ENCODE measurements at regions of chr13 and their contacts with region 1.

Region 1: DNA sequence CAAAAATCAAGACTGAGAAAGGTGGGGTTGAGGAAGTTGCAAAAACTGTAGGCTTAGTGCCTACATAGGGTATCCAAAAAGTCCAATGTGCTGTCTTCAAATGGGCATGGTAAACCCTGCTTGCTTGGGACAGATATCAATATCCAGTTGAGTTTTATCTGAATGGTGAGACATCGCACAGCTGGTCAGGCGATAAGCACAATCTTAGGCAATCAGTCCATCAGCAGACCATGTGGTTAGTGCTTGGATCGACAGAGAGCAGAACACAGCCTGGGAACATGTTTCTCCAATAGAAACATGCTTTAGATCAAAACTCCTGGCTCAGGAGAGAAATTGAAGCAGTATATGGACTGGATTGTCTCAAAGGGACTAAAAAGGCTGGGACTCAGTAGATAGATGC is 151.3 kb upstream of the IPO5 start:
- DNase-seq: no peak
- H3K4me3 ChIP-seq: no peak overlapping the region
- H3K27ac ChIP-seq: no peak overlapping the region
- H3K4me1 ChIP-seq: no peaks in the 10 kb centered on the region
- H3K27me3 ChIP-seq: peaks cover 10% of the 10 kb centered on the region
- CTCF ChIP-seq: no peak

Region 2: DNA sequence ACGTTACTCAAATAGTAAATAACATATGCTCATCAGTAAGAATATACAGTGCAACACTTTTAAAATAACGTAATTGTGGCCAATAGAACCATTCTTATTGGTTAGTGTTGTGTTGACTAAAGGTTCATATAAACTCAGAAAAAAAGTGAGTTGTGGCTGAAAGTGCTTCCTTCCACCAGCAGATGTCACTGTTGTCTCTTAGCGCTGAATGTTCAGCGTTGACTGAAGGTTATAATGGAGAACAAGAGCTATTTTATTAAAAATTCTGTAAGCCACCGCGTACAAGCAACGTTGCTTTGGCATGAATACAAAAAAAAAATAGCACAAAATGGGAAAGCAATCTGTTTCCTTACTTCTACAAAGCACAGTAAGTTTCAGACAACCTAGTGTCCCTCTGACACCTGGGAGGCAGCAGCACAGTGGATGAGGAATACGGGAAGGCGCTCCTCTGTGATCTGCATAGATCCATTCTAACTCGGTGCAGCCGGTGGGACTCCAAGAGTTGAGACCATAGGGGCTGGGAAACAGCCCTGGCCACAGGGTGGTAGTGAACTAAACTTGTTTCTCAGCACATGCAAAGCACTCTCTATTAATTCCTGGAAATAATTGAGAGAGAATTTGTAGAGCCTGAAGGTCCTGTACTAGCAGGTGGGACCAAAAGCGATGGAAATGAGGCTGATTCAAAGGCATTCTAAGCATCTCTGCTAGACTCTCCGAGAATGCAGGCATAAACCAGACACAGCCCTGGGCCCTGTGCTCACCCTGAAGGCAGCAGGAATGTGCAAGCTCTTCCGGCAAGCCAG is 784.0 kb before region 1 on chr13:
- intact Hi-C with region 1: loop called (anchors 5 kb)
- DNase-seq: no peak
- H3K4me3 ChIP-seq: peak overlapping the region; percentile 15
- H3K27ac ChIP-seq: no peak overlapping the region
- H3K4me1 ChIP-seq: peaks cover 5% of the 10 kb centered on the region
- H3K27me3 ChIP-seq: peaks cover 24% of the 10 kb centered on the region
- CTCF ChIP-seq: peak; percentile 95

Region 3: DNA sequence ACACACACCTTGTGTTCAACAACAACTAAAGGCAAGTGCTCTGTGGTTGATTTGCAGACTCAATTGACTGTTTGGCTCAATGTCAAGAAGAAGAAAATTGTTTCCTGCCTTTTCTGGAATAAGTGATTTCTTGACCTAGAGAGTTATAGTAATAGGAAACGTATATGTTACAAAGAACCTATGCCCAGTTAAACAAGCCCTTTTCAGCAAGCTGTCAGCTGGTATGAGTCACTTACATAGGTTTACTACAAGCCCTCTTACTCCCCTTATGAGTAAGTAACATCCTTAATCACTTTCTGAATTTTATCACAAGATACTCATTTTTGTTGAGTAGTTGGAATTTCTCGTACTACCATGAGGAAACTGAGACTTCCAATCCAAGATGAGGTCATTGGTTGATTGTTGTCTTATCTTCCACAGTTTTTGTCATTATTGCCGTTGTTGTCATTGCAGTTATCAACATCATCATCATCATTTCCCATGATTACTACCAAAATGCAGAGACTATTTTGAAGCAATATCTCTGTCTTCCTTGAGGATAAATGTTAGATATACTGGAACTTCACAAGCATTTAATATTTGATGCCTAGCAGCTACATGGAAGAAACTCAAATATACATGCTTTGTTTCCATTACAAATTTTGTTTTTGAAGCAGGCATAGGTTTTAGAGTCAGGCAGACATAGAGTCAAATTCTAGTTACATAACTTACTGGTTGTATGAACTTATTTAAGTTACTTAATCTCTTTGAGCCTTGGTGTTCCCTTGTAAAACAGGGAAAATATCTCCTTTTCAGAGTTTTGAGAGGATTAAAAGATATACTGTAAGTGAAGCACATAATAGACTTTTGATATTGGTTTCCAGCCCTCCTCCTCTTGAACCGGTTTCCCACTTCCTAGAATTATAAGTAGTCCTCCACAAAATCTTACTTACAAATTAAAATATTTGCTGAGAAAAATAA is 262.3 kb before region 1 on chr13:
- intact Hi-C with region 1: no loop called
- DNase-seq: no peak
- H3K4me3 ChIP-seq: no peak overlapping the region
- H3K27ac ChIP-seq: peak overlapping the region; percentile 28
- H3K4me1 ChIP-seq: peaks cover 40% of the 10 kb centered on the region
- H3K27me3 ChIP-seq: no peaks in the 10 kb centered on the region
- CTCF ChIP-seq: no peak

Region 4: GRCh38 chr13:98622931-98623331 is 820.7 kb after region 1 on chr13:
- intact Hi-C with region 1: no loop called
- DNase-seq: no peak
- H3K4me3 ChIP-seq: no peak overlapping the region
- H3K27ac ChIP-seq: no peak overlapping the region
- H3K4me1 ChIP-seq: peaks cover 2% of the 10 kb centered on the region
- H3K27me3 ChIP-seq: no peaks in the 10 kb centered on the region
- CTCF ChIP-seq: no peak

Measured in left ventricle myocardium inferior (tissue), 1 donor.